ENCODE measurements at regions of chr5 and their contacts with region 1.

Region 1: DNA sequence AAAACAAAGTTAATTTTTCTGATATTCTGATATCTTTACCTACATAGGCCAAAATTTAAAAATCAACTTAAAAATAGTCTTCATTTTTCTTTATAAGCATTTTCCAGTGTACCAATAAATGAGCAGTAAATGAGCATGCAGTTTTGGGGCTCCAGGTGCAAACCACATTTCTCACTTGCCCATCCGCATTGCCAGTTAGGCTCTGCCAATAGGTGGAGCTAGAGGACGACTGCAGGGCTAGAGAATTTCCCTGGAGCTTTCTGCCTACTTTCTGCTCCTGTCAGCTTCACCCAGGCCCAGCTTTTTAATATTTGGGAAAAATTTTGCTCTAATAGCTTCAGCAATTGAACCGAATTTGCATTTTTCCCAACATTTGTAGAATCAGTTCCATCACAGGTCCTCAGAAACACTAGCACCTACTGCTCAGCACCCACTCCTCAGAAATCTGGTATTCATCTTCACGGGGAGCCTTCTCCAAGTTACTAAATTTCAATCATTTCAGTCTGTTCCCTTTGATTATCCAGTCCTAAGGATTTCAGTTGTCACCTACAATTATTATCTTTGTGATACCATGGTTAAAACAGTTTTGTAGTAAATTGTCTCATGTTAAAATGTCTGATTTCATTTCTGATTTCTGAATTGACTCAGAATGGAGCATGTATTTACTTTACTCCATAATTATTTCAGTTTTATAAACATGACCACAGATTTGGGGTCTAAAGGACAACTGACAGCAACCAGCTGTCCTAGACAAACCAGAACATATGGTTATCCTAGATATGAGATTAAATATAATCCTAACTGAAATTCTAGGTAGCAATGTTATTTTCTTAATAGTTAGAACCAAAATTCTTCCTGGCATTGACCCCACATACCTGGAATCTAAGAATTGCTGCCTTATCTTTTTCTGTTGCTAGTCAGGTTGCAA is 104.6 kb upstream of the FAM174A start:
- H3K4me3 Mint-ChIP-seq: no peak overlapping the region
- H3K27ac Mint-ChIP-seq: no peak overlapping the region
- H3K4me1 Mint-ChIP-seq: no peaks in the 10 kb centered on the region
- H3K27me3 Mint-ChIP-seq: no peaks in the 10 kb centered on the region

Region 2: GRCh38 chr5:100889165-100889743 is 458.7 kb after region 1 on chr5:
- intact Hi-C with region 1: loop called (anchors 10 kb)
- H3K4me3 Mint-ChIP-seq: no peak overlapping the region
- H3K27ac Mint-ChIP-seq: peak overlapping the region; percentile 74
- H3K4me1 Mint-ChIP-seq: peaks cover 30% of the 10 kb centered on the region
- H3K27me3 Mint-ChIP-seq: no peaks in the 10 kb centered on the region

Region 3: DNA sequence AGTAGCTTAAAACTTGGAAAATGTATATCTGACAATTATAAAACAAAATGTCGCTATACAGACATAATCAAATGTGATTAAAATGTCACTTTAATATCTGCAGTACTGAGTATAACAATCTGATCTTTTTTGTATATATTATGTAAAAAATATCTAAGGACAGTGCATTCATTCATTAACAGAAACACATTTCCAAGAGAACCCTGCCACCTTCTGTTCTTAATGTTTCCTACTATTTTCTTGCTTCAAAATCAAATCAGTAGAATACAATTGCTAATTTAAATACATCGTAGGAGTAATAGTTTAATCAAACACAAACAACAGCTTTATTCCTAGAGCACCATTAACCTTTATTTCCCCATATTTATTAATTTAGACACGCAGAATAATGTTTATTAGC is 615.2 kb after region 1 on chr5:
- intact Hi-C with region 1: loop called (anchors 5 kb)
- H3K4me3 Mint-ChIP-seq: no peak overlapping the region
- H3K27ac Mint-ChIP-seq: no peak overlapping the region
- H3K4me1 Mint-ChIP-seq: no peaks in the 10 kb centered on the region
- H3K27me3 Mint-ChIP-seq: no peaks in the 10 kb centered on the region

Region 4: GRCh38 chr5:101385276-101385675 is 954.7 kb after region 1 on chr5:
- intact Hi-C with region 1: loop called (anchors 5 kb)
- H3K4me3 Mint-ChIP-seq: no peak overlapping the region
- H3K27ac Mint-ChIP-seq: no peak overlapping the region
- H3K4me1 Mint-ChIP-seq: no peaks in the 10 kb centered on the region
- H3K27me3 Mint-ChIP-seq: no peaks in the 10 kb centered on the region

Region 5: DNA sequence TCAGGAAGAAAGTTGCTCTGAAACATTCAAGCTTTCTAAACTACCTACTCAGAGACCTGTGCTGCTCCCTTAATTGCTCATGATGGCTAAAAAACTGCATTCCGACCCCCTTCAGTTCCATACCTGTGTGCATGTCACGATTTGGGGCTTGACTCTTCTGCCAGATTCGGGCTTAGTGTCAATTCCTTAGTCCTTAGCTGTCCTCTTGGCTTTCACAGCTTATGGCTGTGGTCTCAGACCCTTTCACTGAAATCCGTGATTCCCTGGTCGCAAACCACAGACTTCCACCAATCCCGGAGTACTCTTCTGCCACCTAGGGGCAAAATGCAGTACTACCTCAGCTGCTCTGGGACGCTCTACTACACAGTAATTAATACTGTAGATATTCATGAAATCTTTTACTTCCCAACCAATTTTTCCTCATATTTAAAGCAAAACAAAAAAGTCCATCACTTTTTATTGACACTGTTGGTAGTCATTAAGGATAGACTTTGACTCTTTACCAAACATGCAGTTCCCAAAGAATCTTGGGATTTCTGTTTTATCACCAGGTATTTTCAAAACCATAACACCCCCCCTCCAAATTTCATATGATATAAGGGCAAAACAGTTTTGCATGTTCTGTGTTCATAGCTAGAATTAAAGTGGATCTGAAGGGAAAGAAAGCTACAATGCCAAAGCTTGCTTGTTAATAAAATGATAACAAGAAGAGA is 1248.1 kb after region 1 on chr5:
- intact Hi-C with region 1: loop called (anchors 2 kb)
- H3K4me3 Mint-ChIP-seq: no peak overlapping the region
- H3K27ac Mint-ChIP-seq: no peak overlapping the region
- H3K4me1 Mint-ChIP-seq: peaks cover 4% of the 10 kb centered on the region
- H3K27me3 Mint-ChIP-seq: no peaks in the 10 kb centered on the region